Activated naive CD4-positive, alpha-beta T cell treated with anti-CD3 and anti-CD28 coated beads for 36 hours (primary cell): ENCODE measurements at regions of chr15 and their contacts with region 1.

Region 1: DNA sequence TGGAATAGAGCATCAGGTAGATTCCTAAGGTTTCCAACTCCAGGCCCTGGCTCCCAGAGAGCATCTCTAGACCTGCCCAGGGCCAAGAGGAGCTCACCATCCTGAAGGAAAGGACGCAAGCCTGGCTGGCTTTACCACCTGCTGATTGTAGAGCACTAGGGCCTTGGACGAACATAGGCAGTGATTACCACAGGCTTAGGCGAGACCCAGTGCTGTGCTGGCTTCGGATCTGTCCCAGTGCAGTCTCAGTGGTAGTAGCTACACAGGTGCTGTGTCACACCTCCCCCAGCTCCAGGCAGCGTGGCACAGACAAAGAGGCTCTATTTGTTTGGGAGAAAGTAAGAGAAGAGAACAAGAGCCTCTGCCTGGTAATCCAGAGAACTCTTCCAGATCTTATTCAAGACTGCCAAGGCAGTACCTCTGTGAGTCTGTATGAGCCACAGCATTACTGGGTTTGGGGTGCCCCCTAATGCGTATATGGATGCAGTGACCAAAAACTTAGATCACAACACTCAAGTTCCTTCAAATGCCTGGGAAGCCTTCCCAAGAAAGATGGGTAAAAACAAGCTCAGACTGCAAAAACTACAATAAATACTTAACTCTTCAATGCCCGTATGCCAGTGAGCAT is 25.4 kb downstream of the ISG20 start:
- DNase-seq: peak; percentile 78
- H3K4me3 Mint-ChIP-seq: no peak overlapping the region
- H3K27ac Mint-ChIP-seq: no peak overlapping the region
- H3K4me1 Mint-ChIP-seq: peaks cover 31% of the 10 kb centered on the region
- H3K27me3 Mint-ChIP-seq: peaks cover 2% of the 10 kb centered on the region

Region 2: GRCh38 chr15:88476635-88477060 is 187.6 kb before region 1 on chr15:
- CTCF ChIA-PET with region 1: interaction called, 8 read pairs
- intact Hi-C with region 1: loop called (anchors 1 kb)
- DNase-seq: peak; percentile 29
- H3K4me3 Mint-ChIP-seq: no peak overlapping the region
- H3K27ac Mint-ChIP-seq: no peak overlapping the region
- H3K4me1 Mint-ChIP-seq: peaks cover 9% of the 10 kb centered on the region
- H3K27me3 Mint-ChIP-seq: no peaks in the 10 kb centered on the region

Region 3: DNA sequence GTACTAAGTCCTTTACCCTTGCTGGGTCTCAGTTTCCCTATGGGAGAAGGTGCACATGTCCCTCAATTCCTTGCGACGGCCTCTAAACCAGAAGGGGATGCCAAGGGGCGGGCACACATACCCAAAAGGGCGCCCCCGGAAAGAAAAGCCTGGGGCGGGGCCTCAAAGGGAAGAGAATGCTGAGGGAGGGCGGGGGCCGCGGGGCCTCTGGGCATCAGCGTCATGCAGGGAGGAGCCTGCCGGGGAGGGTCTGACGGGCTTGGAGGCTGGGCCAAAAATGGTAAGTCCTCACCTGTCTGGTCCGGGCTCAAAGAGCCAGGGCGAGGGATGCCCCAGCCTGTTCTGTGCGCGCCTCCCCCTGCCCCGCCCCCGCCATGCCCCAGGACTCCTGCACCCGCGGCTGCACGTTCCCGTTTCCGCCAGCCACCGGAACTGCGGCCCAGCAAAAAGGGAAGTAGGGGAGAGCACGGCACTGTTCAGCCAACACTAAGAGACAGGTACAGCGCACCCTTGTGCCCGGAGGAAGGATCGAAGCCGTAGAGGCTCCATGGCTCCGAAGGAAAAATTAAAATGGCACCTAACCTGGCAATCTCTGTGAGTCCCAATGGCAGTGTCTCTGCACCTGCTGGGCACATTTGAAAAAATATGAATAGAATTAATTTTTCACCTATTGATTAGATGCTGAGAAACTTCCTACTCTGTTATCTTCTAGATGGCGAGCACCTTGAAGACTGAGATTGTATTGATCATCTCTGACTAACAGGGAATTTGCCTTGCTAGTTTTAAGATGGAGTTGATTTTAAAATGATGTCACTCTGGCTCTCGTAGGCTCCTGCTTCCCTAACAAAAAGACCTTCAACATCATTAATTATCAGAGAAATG is 117.8 kb before region 1 on chr15 and contains the start of gene DET1:
- CTCF ChIA-PET with region 1: no interaction called
- intact Hi-C with region 1: loop called (anchors 1 kb)
- DNase-seq: peak; percentile 98
- H3K4me3 Mint-ChIP-seq: peak within 1 kb of the TSS; percentile 90
- H3K27ac Mint-ChIP-seq: peak within 1 kb of the TSS; percentile 90
- H3K4me1 Mint-ChIP-seq: peaks cover 15% of the 10 kb centered on the region
- H3K27me3 Mint-ChIP-seq: no peaks in the 10 kb centered on the region
- total RNA-seq, gene DET1: 2.0 to 2.9 TPM

Region 4: GRCh38 chr15:88638626-88639372 is 25.5 kb before region 1 on chr15 and contains the start of gene ISG20:
- CTCF ChIA-PET with region 1: interaction called, 9 read pairs
- intact Hi-C with region 1: loop called (anchors 1 kb)
- DNase-seq: peak; percentile 99
- H3K4me3 Mint-ChIP-seq: peak within 1 kb of the TSS; percentile 81
- H3K27ac Mint-ChIP-seq: peak within 1 kb of the TSS; percentile 96
- H3K4me1 Mint-ChIP-seq: peaks cover 79% of the 10 kb centered on the region
- H3K27me3 Mint-ChIP-seq: no peaks in the 10 kb centered on the region
- total RNA-seq, gene ISG20: 51.2 to 56.5 TPM

Region 5: DNA sequence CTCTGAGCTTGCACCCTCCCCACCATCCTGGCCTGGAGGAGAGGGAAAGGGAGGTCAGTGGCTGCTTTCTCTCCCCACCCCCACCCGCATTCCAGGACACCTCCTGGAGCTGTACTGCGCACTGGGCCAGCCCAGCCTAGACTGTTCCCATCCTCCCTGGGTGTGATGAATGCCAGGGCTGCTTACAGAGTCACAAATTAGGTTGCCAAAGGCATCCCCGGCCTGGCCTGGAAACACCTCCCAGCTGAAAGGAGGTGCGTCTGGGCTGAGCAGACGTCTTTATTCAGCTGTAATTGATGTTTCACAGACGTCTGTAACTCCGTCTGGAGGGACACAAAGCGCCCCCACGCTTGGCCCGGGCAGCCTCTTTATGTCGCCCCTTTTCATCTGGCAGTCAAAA is 784.6 kb after region 1 on chr15:
- CTCF ChIA-PET with region 1: no interaction called
- intact Hi-C with region 1: no loop called
- DNase-seq: no peak
- H3K4me3 Mint-ChIP-seq: no peak overlapping the region
- H3K27ac Mint-ChIP-seq: no peak overlapping the region
- H3K4me1 Mint-ChIP-seq: no peaks in the 10 kb centered on the region
- H3K27me3 Mint-ChIP-seq: peaks cover 25% of the 10 kb centered on the region